ENCODE measurements at regions of chr2 and their contacts with region 1.

Region 1: DNA sequence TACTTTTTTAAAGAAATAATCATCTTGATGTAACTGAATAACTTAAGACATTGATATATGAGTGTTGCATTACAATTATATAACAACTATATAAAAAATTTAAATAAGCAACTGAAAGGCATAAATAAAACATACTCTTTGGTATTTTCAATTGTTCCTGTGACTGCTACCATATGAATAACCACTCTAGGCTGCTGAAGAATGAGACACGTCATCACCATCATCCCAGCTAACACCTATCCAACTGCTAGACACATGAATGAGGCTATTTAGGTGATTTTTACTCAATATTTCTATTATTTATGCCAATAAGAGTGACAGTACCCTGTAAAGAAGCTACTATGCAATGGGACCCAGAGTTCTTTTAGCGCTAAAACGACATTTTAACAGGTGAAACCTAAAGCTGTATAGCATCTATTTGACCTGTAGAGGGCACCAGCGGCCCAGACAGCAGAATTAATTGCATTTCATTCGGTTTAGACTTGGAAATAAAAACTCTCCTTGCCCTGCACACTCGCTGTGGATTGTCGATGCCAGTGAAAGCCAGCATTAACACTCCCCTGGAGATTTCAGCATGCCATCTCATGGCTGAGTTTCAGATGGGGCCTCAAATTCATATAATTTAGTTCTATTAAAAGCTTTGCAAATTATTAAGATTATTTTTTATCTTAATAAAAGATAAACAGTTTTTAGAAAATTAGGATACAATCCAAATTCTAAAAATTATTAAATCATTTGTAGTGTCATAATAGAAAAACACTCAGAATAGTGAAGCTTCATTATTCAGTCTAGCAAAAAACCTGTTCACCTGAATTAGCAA is 89.4 kb upstream of the MAP2 start:
- DNase-seq: no peak
- H3K4me3 ChIP-seq: no peak overlapping the region
- CTCF ChIP-seq: peak; percentile 69

Region 2: GRCh38 chr2:209322041-209322440 is 12.4 kb before region 1 on chr2:
- CTCF ChIA-PET with region 1: interaction called, 45 read pairs
- POLR2A ChIA-PET with region 1: no interaction called
- DNase-seq: no peak
- H3K4me3 ChIP-seq: no peak overlapping the region
- CTCF ChIP-seq: no peak

Region 3: GRCh38 chr2:209423562-209424198 is 89.3 kb after region 1 on chr2 and contains the start of gene MAP2:
- CTCF ChIA-PET with region 1: interaction called, 124 read pairs
- POLR2A ChIA-PET with region 1: no interaction called
- DNase-seq: no peak
- H3K4me3 ChIP-seq: peak within 1 kb of the TSS; percentile 67
- CTCF ChIP-seq: peak; percentile 87

Region 4: GRCh38 chr2:209556354-209556961 is 222.1 kb after region 1 on chr2:
- CTCF ChIA-PET with region 1: interaction called, 94 read pairs
- POLR2A ChIA-PET with region 1: no interaction called
- DNase-seq: no peak
- H3K4me3 ChIP-seq: no peak overlapping the region
- CTCF ChIP-seq: peak; percentile 66

Region 5: GRCh38 chr2:209577376-209578357 is 243.3 kb after region 1 on chr2:
- CTCF ChIA-PET with region 1: interaction called, 79 read pairs
- POLR2A ChIA-PET with region 1: no interaction called
- DNase-seq: no peak
- H3K4me3 ChIP-seq: no peak overlapping the region
- CTCF ChIP-seq: no peak

Measured in AG04449 (cell line).